Mammary epithelial cell (primary cell): ENCODE measurements at regions of chr13 and their contacts with region 1.

Region 1: GRCh38 chr13:20288561-20288960 is 56.4 kb upstream of the GJB6 start:
- DNase-seq: no peak
- H3K4me3 ChIP-seq: no peak overlapping the region
- H3K27ac ChIP-seq: no peak overlapping the region
- H3K4me1 ChIP-seq: no peaks in the 10 kb centered on the region
- H3K27me3 ChIP-seq: no peaks in the 10 kb centered on the region
- CTCF ChIP-seq: no peak

Region 2: GRCh38 chr13:20254076-20254475 is 34.5 kb before region 1 on chr13:
- CTCF ChIA-PET with region 1: no interaction called
- dilution Hi-C with region 1: loop called (anchors 5 kb)
- in situ Hi-C with region 1: no loop called
- intact Hi-C with region 1: no loop called
- DNase-seq: no peak
- H3K4me3 ChIP-seq: no peak overlapping the region
- H3K27ac ChIP-seq: no peak overlapping the region
- H3K4me1 ChIP-seq: no peaks in the 10 kb centered on the region
- H3K27me3 ChIP-seq: no peaks in the 10 kb centered on the region
- CTCF ChIP-seq: no peak

Region 3: DNA sequence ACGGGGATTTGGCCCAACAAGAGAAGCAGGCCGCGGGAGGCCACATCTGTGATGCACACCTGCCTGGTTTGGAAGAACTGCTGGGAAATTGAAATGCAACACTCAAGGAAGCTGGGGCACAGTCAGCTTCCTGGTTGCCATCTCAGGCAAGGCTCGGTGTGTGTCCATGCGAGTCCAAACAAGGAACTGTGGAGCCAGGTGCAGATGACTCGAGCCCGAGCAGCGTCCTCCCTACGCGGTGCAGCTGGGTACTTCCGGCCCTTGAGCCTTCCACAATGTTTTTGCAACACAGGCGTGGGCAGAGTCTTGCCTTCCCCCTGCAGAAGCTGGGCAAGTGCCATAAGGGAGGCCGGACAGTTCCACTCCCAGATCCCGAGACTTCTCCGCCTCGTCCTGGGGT is 142.5 kb after region 1 on chr13:
- CTCF ChIA-PET with region 1: no interaction called
- dilution Hi-C with region 1: no loop called
- in situ Hi-C with region 1: no loop called
- intact Hi-C with region 1: no loop called
- DNase-seq: peak; percentile 88
- H3K4me3 ChIP-seq: no peak overlapping the region
- H3K27ac ChIP-seq: peak overlapping the region; percentile 22
- H3K4me1 ChIP-seq: peaks cover 45% of the 10 kb centered on the region
- H3K27me3 ChIP-seq: no peaks in the 10 kb centered on the region
- CTCF ChIP-seq: no peak